Activated CD8-positive, alpha-beta T cell treated with anti-CD3 and anti-CD28 coated beads, Interleukin-2, amount 10 ng/mL, durations not matched to agents 7 days and 5 days (primary cell): ENCODE measurements at regions of chr12 and their contacts with region 1.

Region 1: DNA sequence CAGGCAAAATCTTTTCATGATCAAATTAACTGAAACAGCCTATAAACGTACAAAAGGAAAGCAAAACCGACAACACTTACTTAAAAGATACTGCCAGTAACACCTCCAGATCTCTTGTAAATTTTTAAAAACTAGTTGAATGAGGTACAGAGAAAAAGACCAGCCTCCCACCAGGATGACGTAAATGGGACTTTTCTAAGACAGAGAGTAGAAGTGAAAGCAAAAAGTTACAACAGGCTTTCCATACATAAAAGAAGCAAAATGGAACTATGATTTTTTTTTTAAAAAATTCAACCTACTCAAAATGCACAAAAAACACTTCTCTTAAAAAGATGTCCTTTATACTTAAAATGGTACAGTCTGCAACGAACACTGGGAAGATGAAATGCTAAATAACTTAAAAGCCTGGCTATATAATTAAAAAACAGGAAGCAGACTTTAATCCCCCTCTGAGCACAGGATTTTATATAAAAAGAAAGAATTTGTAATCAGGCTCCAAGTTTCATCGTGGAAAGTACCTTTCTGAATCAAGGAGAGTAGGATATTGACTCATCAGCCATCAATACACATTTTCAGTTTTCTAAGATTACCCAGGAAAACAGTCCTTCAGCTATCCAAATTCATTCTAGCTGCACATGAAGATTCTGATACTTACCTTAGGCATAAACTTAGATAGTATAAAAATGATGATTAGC is 14.2 kb upstream of the MYO1A start:
- DNase-seq: peak; percentile 73
- ATAC-seq: peak; percentile 90
- H3K4me3 Mint-ChIP-seq: peak overlapping the region; percentile 76
- H3K27ac Mint-ChIP-seq: peak overlapping the region; percentile 89
- H3K4me1 Mint-ChIP-seq: peaks cover 34% of the 10 kb centered on the region
- H3K27me3 Mint-ChIP-seq: no peaks in the 10 kb centered on the region

Region 2: GRCh38 chr12:57012600-57013465 is 51.3 kb before region 1 on chr12:
- CTCF ChIA-PET with region 1: interaction called, 201 read pairs
- POLR2A ChIA-PET with region 1: interaction called, 5 read pairs
- DNase-seq: no peak
- ATAC-seq: no peak
- H3K4me3 Mint-ChIP-seq: no peak overlapping the region
- H3K27ac Mint-ChIP-seq: no peak overlapping the region
- H3K4me1 Mint-ChIP-seq: peaks cover 40% of the 10 kb centered on the region
- H3K27me3 Mint-ChIP-seq: peaks cover 10% of the 10 kb centered on the region

Region 3: GRCh38 chr12:57019983-57020719 is 44.0 kb before region 1 on chr12:
- CTCF ChIA-PET with region 1: interaction called, 229 read pairs
- POLR2A ChIA-PET with region 1: no interaction called
- DNase-seq: no peak
- ATAC-seq: no peak
- H3K4me3 Mint-ChIP-seq: no peak overlapping the region
- H3K27ac Mint-ChIP-seq: no peak overlapping the region
- H3K4me1 Mint-ChIP-seq: peaks cover 6% of the 10 kb centered on the region
- H3K27me3 Mint-ChIP-seq: peaks cover 3% of the 10 kb centered on the region

Region 4: DNA sequence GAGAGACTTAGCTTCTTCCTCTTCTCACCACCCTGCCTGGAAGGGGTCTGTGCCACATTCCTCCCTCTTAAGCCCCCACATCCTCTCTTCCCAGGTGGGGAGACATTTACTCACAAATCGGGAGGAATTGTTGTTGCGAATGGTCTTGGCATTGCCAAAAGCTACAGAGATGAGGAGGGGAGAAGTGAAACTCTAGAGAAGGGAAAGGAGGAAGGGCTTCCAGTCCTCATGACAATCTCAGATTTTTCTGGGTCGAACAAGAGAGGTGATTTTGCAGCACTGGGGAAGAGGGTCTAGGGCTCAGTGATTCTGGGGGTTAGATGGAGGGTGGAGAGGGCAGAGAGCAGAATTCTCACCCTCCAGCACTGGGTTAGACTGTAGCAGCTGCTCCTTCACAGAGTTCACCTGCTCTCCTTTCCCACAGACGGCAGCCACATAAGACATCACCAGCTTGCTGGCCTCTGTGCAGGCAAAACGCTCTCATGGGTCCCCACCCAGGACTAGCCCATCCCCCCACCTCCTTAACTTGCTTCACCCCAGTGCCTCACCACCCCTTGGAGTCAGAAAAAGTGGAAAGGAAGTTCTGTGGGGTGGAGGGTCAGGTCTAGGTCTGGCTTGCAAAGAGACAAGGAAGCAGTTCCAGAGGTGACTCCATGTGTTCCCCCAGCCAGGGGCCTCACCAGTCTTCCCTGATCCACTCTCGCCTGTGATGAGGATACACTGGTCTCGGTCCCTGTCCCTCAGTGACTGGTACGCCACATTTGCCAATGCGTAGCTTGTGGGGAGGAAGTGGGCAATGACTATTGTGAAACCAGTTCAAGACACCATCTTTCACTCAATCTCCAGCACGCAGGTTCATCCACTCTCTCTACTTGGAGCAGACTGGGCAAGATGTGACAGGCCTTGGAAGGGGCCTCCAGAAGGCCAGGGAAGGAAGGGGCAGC is 16.9 kb before region 1 on chr12:
- CTCF ChIA-PET with region 1: interaction called, 105 read pairs
- POLR2A ChIA-PET with region 1: interaction called, 9 read pairs
- DNase-seq: peak; percentile 84
- ATAC-seq: peak; percentile 83
- H3K4me3 Mint-ChIP-seq: peak overlapping the region; percentile 49
- H3K27ac Mint-ChIP-seq: peak overlapping the region; percentile 86
- H3K4me1 Mint-ChIP-seq: peaks cover 46% of the 10 kb centered on the region
- H3K27me3 Mint-ChIP-seq: no peaks in the 10 kb centered on the region

Region 5: DNA sequence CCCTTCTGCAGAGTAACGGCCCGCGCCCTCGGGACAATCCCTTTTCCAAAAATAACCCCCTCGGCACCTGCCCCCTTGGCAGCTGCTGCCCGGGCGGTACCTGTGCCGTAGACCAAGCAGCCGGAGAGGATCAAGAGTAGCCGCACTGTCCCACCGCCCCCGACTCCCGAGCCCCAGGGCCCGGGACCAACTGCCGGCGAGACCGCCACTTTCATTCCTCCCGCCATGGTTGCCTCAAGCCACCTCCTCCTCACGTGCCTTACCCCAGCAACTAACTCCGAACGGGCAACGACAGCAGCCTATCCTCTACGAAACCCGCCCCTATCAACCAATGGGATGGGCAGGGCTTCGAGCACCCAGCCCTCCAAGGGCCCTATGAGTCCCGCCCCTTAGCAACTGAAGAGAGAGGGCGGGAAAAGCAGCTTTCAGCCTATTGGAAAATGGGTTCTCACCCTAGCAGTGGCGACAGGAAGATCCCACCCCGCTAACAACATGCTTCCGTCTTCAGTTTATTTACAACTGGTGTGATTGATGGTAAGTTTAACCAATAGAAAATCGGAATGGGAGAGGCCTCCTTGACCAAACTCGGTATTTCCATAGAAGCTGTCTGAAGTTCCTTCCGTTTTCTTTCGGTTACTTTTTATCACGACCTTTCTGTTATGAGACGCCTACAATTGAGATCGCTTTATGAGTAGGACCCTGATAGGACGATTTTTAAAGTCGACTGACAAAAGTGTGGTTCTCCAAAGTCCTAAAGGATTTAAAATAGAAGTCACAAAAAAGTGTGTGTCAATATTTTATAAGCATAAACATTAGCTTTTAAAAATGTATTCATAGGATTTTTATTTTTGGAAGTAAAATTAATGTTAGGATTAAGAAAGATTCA is 14.6 kb after region 1 on chr12 and contains the start of gene NEMP1:
- CTCF ChIA-PET with region 1: interaction called, 48 read pairs
- POLR2A ChIA-PET with region 1: interaction called, 29 read pairs
- DNase-seq: peak; percentile 99
- ATAC-seq: peak; percentile 97
- H3K4me3 Mint-ChIP-seq: peak within 1 kb of the TSS; percentile 99
- H3K27ac Mint-ChIP-seq: peak within 1 kb of the TSS; percentile 98
- H3K4me1 Mint-ChIP-seq: peaks cover 29% of the 10 kb centered on the region
- H3K27me3 Mint-ChIP-seq: no peaks in the 10 kb centered on the region
- total RNA-seq, gene NEMP1: 56.4 to 56.9 TPM

Region 6: GRCh38 chr12:57135527-57136326 is 71.6 kb after region 1 on chr12:
- CTCF ChIA-PET with region 1: no interaction called
- POLR2A ChIA-PET with region 1: no interaction called
- DNase-seq: no peak
- ATAC-seq: no peak
- H3K4me3 Mint-ChIP-seq: no peak overlapping the region
- H3K27ac Mint-ChIP-seq: no peak overlapping the region
- H3K4me1 Mint-ChIP-seq: no peaks in the 10 kb centered on the region
- H3K27me3 Mint-ChIP-seq: peaks cover 22% of the 10 kb centered on the region

Region 7: DNA sequence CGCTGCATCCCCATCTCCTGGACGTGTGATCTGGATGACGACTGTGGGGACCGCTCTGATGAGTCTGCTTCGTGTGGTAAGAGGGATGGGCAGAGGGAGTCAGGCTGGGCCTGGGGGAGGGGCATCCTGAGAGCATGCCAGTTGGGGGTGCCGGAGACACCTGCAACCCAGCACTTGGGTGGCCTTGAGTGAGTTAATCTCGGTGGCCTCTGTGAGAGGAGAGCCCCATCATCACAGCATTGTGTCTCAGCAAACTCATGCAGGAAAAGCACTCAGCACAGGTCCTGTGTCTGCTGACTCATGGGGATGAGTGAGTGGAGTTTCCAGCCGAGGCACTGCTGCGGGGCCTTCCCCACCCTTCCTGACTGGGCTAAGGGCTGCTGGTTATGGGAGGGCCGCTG is 102.8 kb after region 1 on chr12:
- CTCF ChIA-PET with region 1: no interaction called
- POLR2A ChIA-PET with region 1: no interaction called
- DNase-seq: no peak
- ATAC-seq: peak; percentile 18
- H3K4me3 Mint-ChIP-seq: no peak overlapping the region
- H3K27ac Mint-ChIP-seq: no peak overlapping the region
- H3K4me1 Mint-ChIP-seq: no peaks in the 10 kb centered on the region
- H3K27me3 Mint-ChIP-seq: no peaks in the 10 kb centered on the region

Region 8: GRCh38 chr12:57352166-57352565 is 288.0 kb after region 1 on chr12:
- CTCF ChIA-PET with region 1: no interaction called
- POLR2A ChIA-PET with region 1: no interaction called
- DNase-seq: no peak
- ATAC-seq: no peak
- H3K4me3 Mint-ChIP-seq: no peak overlapping the region
- H3K27ac Mint-ChIP-seq: no peak overlapping the region
- H3K4me1 Mint-ChIP-seq: no peaks in the 10 kb centered on the region
- H3K27me3 Mint-ChIP-seq: no peaks in the 10 kb centered on the region